Posterior vena cava (tissue), 2 donors: ENCODE measurements at regions of chr1 and their contacts with region 1.

Region 1: GRCh38 chr1:61641578-61642336 is 83.2 kb downstream of the TM2D1 start:
- DNase-seq: peak; percentile 94

Region 2: DNA sequence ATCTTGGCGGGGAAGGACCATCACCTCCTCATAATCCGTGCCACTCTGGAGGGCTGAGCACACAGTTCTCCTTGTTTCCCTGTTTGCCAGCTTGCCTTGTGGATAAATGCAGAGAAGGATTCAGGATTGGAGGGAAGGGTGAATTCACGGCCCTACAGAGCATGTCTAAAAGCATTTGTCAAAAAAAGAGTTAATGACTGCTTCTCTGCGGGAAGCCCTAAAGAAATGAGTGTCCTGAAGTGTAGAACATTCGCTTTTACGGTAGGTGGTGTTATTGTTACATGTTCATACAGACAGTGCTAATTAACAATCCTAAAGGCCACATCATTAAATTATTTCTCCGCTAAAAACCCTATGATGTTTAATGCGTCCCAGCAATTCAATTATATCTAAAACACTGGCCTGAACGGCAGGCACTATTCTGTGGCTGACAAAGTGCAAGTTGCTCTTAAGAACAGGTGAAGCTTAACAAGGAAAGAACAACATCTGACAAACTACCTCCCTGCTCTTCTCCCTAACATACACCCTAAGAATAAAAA is 671.7 kb before region 1 on chr1:
- intact Hi-C with region 1: loop called in 1 of 2 experiments (anchors 5 kb)
- DNase-seq: no peak

Region 3: GRCh38 chr1:61588736-61589672 is 52.8 kb before region 1 on chr1:
- intact Hi-C with region 1: no loop called
- DNase-seq: no peak